ENCODE measurements at regions of chr16 and their contacts with region 1.

Region 1: DNA sequence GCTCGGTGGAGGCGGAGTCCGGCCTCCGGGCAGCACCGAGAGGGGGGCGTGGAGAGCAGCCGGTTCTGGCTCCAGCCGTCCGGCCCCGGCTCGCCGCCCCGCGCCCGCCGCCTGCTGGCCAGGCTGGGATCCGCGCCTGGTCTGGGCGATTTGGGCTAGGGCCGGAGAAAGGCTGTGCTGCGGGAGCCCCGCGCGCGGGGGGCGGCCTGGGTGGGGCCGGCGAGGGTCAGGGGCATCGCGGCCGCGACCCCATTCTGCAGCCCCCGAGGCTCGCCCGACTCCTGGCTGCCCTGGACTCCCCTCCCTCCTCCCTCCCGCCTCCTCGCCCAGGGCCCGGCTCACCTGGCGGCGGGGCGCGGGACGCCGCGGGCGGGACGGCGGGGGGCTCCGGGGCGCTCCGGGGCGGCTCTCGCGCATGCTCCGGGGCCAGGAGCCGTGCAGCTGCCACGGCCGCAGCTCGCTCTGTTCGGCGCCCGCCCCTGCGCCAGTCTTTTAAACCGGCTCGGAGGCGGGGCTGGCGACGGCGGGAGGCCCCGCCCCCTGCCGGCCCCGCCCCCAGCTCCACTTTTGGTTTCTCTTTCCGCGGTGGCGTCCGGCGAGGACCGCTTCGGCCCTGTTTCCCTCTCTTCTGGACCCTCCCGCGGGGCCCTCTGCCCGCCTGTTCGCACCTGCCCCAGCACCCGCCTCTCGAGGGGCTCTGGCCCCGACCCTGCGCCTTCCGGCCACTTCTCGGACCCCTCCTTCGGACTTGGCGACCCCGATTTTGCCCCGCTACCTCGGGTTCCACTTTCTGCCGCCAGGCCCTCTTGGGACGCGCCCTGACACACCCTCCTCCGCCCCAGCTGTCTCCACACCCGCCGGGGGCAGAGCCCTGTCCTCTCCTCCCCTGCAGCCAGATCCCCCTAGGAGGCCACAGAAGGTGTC is at the start of gene SOCS1:
- DNase-seq: peak; percentile 78 to 87 (median 83)
- H3K4me3 ChIP-seq: peak within 1 kb of the TSS; percentile 73 to 85
- H3K4me3 Mint-ChIP-seq: peak within 1 kb of the TSS; percentile 90 to 98 (median 94)
- H3K27ac ChIP-seq: peak within 1 kb of the TSS; percentile 83
- H3K27ac Mint-ChIP-seq: peak within 1 kb of the TSS; percentile 92 to 99 (median 97)
- H3K4me1 ChIP-seq: peaks cover 60% of the 10 kb centered on the region
- H3K4me1 Mint-ChIP-seq: peaks cover 38 to 77% (median 48%) of the 10 kb centered on the region in 4 donors
- H3K27me3 ChIP-seq: no peaks in the 10 kb centered on the region
- H3K27me3 Mint-ChIP-seq: no peaks in the 10 kb centered on the region
- total RNA-seq, gene SOCS1: 14.7 to 16.7 TPM

Region 2: DNA sequence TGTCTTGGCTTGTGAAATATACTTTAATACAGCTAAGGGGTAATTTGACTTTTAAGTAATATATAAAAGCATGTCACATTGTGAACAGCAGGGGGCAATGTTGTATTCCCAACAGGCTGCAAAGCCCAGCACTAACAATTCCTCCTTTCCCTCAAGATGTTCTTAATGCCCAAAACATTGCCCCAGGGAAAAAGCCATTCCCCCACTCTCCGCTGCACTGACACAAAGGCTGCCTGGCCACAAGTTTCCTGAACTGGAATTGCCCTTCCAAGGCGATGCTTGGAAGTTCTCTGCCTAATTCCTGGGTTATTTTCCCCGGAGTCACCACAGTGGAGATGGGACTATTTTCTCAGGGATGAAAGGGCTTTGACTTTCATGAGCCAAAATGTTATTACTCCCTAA is 284.4 kb before region 1 on chr16:
- CTCF ChIA-PET with region 1: interaction called, 197 read pairs
- POLR2A ChIA-PET with region 1: interaction called, 83 read pairs
- intact Hi-C with region 1: loop called (anchors 1 kb)
- DNase-seq: peak in 4 of 5 donors; percentile 41 to 53 (median 48)
- H3K4me3 ChIP-seq: no peak overlapping the region
- H3K4me3 Mint-ChIP-seq: no peak overlapping the region
- H3K27ac ChIP-seq: no peak overlapping the region
- H3K27ac Mint-ChIP-seq: peak overlapping the region in 3 of 7 donors; percentile 25 to 30 (median 27)
- H3K4me1 ChIP-seq: peaks cover 17% of the 10 kb centered on the region
- H3K4me1 Mint-ChIP-seq: peaks cover 11 to 26% (median 13%) of the 10 kb centered on the region in 4 donors
- H3K27me3 ChIP-seq: no peaks in the 10 kb centered on the region
- H3K27me3 Mint-ChIP-seq: no peaks in the 10 kb centered on the region

Region 3: DNA sequence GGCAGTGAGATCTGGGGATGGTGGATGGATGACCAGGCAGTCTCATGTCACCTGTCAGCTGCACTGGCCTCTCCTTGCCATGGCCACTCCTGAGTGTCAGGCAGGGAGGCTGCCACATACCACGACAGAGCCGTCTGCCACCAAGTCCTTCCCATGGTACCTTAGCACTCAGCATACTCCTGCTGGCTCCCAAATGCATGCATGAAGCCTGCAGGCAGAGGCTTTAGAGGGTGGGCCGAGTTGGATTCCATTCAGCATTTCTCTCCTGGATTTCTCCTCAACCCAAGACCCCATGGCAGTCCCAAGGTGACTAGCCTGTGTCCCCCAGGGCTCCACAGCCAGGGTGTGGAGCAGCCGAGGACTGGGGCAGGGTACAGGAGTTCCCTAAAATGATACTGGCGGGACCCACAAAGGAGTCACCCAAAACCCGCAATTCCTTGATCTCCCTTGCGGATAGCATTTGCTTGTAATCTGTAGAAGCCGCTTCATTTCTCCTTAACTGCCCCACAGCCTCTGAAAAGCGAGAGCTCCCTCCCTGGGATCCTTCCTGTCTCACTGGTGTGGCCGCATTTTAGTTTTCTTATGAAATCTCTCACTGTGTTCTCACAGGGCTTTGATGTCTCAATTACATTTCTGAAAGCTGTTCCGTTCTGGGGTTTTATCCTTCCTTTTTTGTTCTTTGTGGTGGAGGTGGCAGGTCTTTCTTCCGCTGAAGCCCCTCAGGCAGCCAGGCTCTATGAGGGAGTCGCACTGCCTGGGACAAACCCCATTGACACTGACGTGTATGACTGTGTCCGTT is 141.4 kb before region 1 on chr16:
- CTCF ChIA-PET with region 1: no interaction called
- POLR2A ChIA-PET with region 1: interaction called, 6 read pairs
- intact Hi-C with region 1: loop called (anchors 10 kb)
- DNase-seq: peak in 3 of 5 donors; percentile 11 to 32 (median 26)
- H3K4me3 ChIP-seq: no peak overlapping the region
- H3K4me3 Mint-ChIP-seq: peak overlapping the region; percentile 46 to 85 (median 74)
- H3K27ac ChIP-seq: peak overlapping the region; percentile 18
- H3K27ac Mint-ChIP-seq: peak overlapping the region; percentile 47 to 91 (median 86)
- H3K4me1 ChIP-seq: peaks cover 30% of the 10 kb centered on the region
- H3K4me1 Mint-ChIP-seq: peaks cover 22 to 38% (median 26%) of the 10 kb centered on the region in 4 donors
- H3K27me3 ChIP-seq: no peaks in the 10 kb centered on the region
- H3K27me3 Mint-ChIP-seq: no peaks in the 10 kb centered on the region

Region 4: GRCh38 chr16:11232852-11233726 is 22.9 kb before region 1 on chr16:
- CTCF ChIA-PET with region 1: interaction called, 17 read pairs
- POLR2A ChIA-PET with region 1: interaction called, 283 read pairs
- intact Hi-C with region 1: loop called (anchors 1 kb)
- DNase-seq: peak; percentile 85 to 89 (median 86)
- H3K4me3 ChIP-seq: peak overlapping the region; percentile 7 to 47
- H3K4me3 Mint-ChIP-seq: peak overlapping the region; percentile 60 to 84 (median 76)
- H3K27ac ChIP-seq: peak overlapping the region; percentile 73
- H3K27ac Mint-ChIP-seq: peak overlapping the region; percentile 93 to 97 (median 96)
- H3K4me1 ChIP-seq: peaks cover 57% of the 10 kb centered on the region
- H3K4me1 Mint-ChIP-seq: peaks cover 38 to 71% (median 55%) of the 10 kb centered on the region in 4 donors
- H3K27me3 ChIP-seq: no peaks in the 10 kb centered on the region
- H3K27me3 Mint-ChIP-seq: no peaks in the 10 kb centered on the region

Region 5: GRCh38 chr16:11297492-11298142 is 41.6 kb after region 1 on chr16:
- CTCF ChIA-PET with region 1: interaction called, 25 read pairs
- POLR2A ChIA-PET with region 1: interaction called, 23 read pairs
- intact Hi-C with region 1: loop called (anchors 5 kb)
- DNase-seq: peak; percentile 59 to 82 (median 62)
- H3K4me3 ChIP-seq: peak overlapping the region in 1 of 2 donors; percentile 29
- H3K4me3 Mint-ChIP-seq: peak overlapping the region; percentile 68 to 86 (median 78)
- H3K27ac ChIP-seq: no peak overlapping the region
- H3K27ac Mint-ChIP-seq: peak overlapping the region; percentile 6 to 74 (median 46)
- H3K4me1 ChIP-seq: peaks cover 16% of the 10 kb centered on the region
- H3K4me1 Mint-ChIP-seq: peaks cover 12 to 16% (median 13%) of the 10 kb centered on the region in 4 donors
- H3K27me3 ChIP-seq: no peaks in the 10 kb centered on the region
- H3K27me3 Mint-ChIP-seq: peaks cover 0 to 2% of the 10 kb centered on the region in 2 donors

Region 6: GRCh38 chr16:11742539-11743307 is 486.7 kb after region 1 on chr16 and contains the start of gene TXNDC11:
- CTCF ChIA-PET with region 1: no interaction called
- POLR2A ChIA-PET with region 1: interaction called, 9 read pairs
- intact Hi-C with region 1: loop called (anchors 5 kb)
- DNase-seq: peak; percentile 98 to 100 (median 99)
- H3K4me3 ChIP-seq: peak within 1 kb of the TSS; percentile 57 to 91
- H3K4me3 Mint-ChIP-seq: peak within 1 kb of the TSS; percentile 94 to 98 (median 95)
- H3K27ac ChIP-seq: peak within 1 kb of the TSS; percentile 88
- H3K27ac Mint-ChIP-seq: peak within 1 kb of the TSS; percentile 96 to 99 (median 98)
- H3K4me1 ChIP-seq: peaks cover 53% of the 10 kb centered on the region
- H3K4me1 Mint-ChIP-seq: peaks cover 39 to 60% (median 48%) of the 10 kb centered on the region in 4 donors
- H3K27me3 ChIP-seq: no peaks in the 10 kb centered on the region
- H3K27me3 Mint-ChIP-seq: no peaks in the 10 kb centered on the region
- total RNA-seq, gene TXNDC11: 51.7 to 59.8 TPM

Measured in CD4-positive, alpha-beta memory T cell (primary cell).